Caco-2 (cell line): ENCODE measurements at regions of chr12 and their contacts with region 1.

Region 1: GRCh38 chr12:22856178-22856577 is 231.2 kb downstream of the ETNK1 start:
- DNase-seq: no peak
- H3K4me3 ChIP-seq: no peak overlapping the region
- H3K4me3 Mint-ChIP-seq: no peak overlapping the region
- H3K27ac Mint-ChIP-seq: no peak overlapping the region
- H3K4me1 ChIP-seq: peaks cover 6% of the 10 kb centered on the region; the same call in 1 of the 2 replicates
- H3K4me1 Mint-ChIP-seq: peaks cover 16% of the 10 kb centered on the region
- H3K27me3 ChIP-seq: no peaks in the 10 kb centered on the region
- H3K27me3 Mint-ChIP-seq: peaks cover 15% of the 10 kb centered on the region
- CTCF ChIP-seq: peak; percentile 66 to 85

Region 2: DNA sequence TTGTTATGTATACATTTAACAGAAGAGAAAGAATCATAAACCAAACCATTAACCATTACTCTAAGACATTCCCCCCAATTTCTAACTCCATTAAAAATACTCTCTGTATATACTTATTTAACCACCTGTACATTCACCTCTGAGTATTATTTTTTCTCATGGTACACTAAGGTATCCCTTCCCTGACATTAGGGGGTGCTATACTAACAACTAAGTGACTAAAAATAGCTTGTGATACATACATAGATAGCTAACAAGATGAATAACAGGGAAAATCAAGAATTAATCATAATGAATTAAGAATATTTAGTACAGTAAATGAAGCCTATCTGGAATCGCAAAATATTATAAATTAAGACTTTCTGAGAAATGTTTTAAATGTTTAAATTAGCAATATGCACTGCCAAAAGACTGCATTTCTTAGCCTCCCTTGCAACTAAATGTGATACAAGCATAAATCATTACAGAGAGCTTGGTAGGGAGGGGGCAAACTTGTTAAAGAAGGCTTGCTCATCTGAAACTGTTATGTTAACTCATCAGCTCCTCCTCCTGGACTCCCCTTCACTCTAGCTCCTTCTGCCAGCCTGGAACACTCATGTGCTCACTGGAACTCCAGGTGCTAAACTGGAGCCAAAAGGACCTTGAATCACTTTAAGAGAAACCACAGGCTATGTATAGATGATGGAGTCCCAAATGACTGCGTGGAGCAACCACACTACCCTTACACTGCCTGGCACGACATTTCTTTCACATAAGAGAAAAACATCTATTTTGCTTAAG is 326.7 kb before region 1 on chr12:
- CTCF ChIA-PET with region 1: no interaction called
- POLR2A ChIA-PET with region 1: no interaction called
- intact Hi-C with region 1: no loop called
- DNase-seq: peak in 1 of 2 experiments; percentile 32
- H3K4me3 ChIP-seq: no peak overlapping the region
- H3K4me3 Mint-ChIP-seq: no peak overlapping the region
- H3K27ac Mint-ChIP-seq: no peak overlapping the region
- H3K4me1 ChIP-seq: peaks cover 5% of the 10 kb centered on the region; the same call in 1 of the 2 replicates
- H3K4me1 Mint-ChIP-seq: peaks cover 6% of the 10 kb centered on the region
- H3K27me3 ChIP-seq: no peaks in the 10 kb centered on the region
- H3K27me3 Mint-ChIP-seq: no peaks in the 10 kb centered on the region
- CTCF ChIP-seq: peak; percentile 63 to 66

Region 3: DNA sequence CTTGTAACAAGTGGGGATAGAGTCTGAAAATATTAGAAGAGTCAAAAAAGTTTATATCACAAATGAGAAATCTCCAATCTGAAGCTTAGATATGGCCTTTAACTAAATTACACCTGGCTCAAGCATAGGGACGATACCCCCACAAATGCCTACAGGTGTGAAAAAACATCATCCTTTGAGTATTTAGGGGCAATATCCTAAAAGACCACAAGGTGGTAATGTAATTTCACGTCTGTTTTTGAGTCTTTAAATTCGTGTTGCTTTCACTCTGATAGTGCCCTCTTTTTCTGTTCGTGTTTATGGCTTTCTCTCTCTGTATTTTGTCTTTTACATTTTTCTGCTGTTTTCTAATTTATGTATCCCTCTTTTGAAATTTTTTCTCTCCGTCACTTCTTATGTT is 146.9 kb before region 1 on chr12:
- CTCF ChIA-PET with region 1: no interaction called
- POLR2A ChIA-PET with region 1: no interaction called
- intact Hi-C with region 1: loop called (anchors 1 kb)
- DNase-seq: peak in 1 of 2 experiments; percentile 32
- H3K4me3 ChIP-seq: no peak overlapping the region
- H3K4me3 Mint-ChIP-seq: no peak overlapping the region
- H3K27ac Mint-ChIP-seq: no peak overlapping the region
- H3K4me1 ChIP-seq: no peaks in the 10 kb centered on the region
- H3K4me1 Mint-ChIP-seq: no peaks in the 10 kb centered on the region
- H3K27me3 ChIP-seq: no peaks in the 10 kb centered on the region; the same call in 1 of the 2 replicates
- H3K27me3 Mint-ChIP-seq: peaks cover 10% of the 10 kb centered on the region
- CTCF ChIP-seq: peak; percentile 47 to 73

Region 4: GRCh38 chr12:22923768-22924365 is 67.7 kb after region 1 on chr12:
- CTCF ChIA-PET with region 1: no interaction called
- POLR2A ChIA-PET with region 1: no interaction called
- intact Hi-C with region 1: loop called (anchors 1 kb)
- DNase-seq: no peak
- H3K4me3 ChIP-seq: no peak overlapping the region
- H3K4me3 Mint-ChIP-seq: no peak overlapping the region
- H3K27ac Mint-ChIP-seq: no peak overlapping the region
- H3K4me1 ChIP-seq: peaks cover 30% of the 10 kb centered on the region
- H3K4me1 Mint-ChIP-seq: peaks cover 21% of the 10 kb centered on the region
- H3K27me3 ChIP-seq: no peaks in the 10 kb centered on the region
- H3K27me3 Mint-ChIP-seq: peaks cover 4% of the 10 kb centered on the region
- CTCF ChIP-seq: no peak

Region 5: DNA sequence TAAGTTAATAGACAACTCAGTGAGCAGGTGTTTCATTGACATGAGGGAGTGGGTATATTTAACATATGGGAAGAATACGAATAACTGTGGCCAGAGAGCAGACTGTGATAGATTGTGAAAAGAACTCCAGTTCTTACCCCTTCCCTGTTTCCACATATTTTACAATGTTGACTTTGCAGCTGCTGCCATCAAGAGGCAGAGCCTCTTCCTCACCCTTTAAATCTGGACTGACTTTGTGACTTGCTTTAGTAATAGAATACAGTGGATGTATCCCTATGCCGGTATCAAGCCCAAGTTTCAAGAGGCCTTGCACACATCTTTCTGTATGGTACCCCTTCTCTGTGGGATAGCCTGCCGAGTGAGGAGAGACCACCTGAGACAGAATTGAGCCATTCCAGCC is 125.5 kb after region 1 on chr12:
- CTCF ChIA-PET with region 1: interaction called, 3 read pairs
- POLR2A ChIA-PET with region 1: no interaction called
- intact Hi-C with region 1: loop called (anchors 1 kb)
- DNase-seq: peak in 1 of 2 experiments; percentile 25
- H3K4me3 ChIP-seq: no peak overlapping the region
- H3K4me3 Mint-ChIP-seq: no peak overlapping the region
- H3K27ac Mint-ChIP-seq: no peak overlapping the region
- H3K4me1 ChIP-seq: no peaks in the 10 kb centered on the region
- H3K4me1 Mint-ChIP-seq: no peaks in the 10 kb centered on the region
- H3K27me3 ChIP-seq: no peaks in the 10 kb centered on the region
- H3K27me3 Mint-ChIP-seq: peaks cover 14% of the 10 kb centered on the region
- CTCF ChIP-seq: peak in 1 of 2 experiments; percentile 40

Region 6: GRCh38 chr12:23126794-23127193 is 270.6 kb after region 1 on chr12:
- CTCF ChIA-PET with region 1: no interaction called
- POLR2A ChIA-PET with region 1: no interaction called
- intact Hi-C with region 1: no loop called
- DNase-seq: no peak
- H3K4me3 ChIP-seq: no peak overlapping the region
- H3K4me3 Mint-ChIP-seq: no peak overlapping the region
- H3K27ac Mint-ChIP-seq: no peak overlapping the region
- H3K4me1 ChIP-seq: no peaks in the 10 kb centered on the region
- H3K4me1 Mint-ChIP-seq: no peaks in the 10 kb centered on the region
- H3K27me3 ChIP-seq: no peaks in the 10 kb centered on the region
- H3K27me3 Mint-ChIP-seq: peaks cover 2% of the 10 kb centered on the region
- CTCF ChIP-seq: peak in 1 of 2 experiments; percentile 27

Region 7: GRCh38 chr12:23204933-23205778 is 349.0 kb after region 1 on chr12:
- CTCF ChIA-PET with region 1: no interaction called
- POLR2A ChIA-PET with region 1: no interaction called
- intact Hi-C with region 1: loop called (anchors 10 kb)
- DNase-seq: peak in 1 of 2 experiments; percentile 56
- H3K4me3 ChIP-seq: no peak overlapping the region
- H3K4me3 Mint-ChIP-seq: no peak overlapping the region
- H3K27ac Mint-ChIP-seq: no peak overlapping the region
- H3K4me1 ChIP-seq: no peaks in the 10 kb centered on the region
- H3K4me1 Mint-ChIP-seq: no peaks in the 10 kb centered on the region
- H3K27me3 ChIP-seq: no peaks in the 10 kb centered on the region
- H3K27me3 Mint-ChIP-seq: peaks cover 14% of the 10 kb centered on the region
- CTCF ChIP-seq: peak; percentile 88 to 96